ENCODE measurements at regions of chr14 and their contacts with region 1.

Region 1: DNA sequence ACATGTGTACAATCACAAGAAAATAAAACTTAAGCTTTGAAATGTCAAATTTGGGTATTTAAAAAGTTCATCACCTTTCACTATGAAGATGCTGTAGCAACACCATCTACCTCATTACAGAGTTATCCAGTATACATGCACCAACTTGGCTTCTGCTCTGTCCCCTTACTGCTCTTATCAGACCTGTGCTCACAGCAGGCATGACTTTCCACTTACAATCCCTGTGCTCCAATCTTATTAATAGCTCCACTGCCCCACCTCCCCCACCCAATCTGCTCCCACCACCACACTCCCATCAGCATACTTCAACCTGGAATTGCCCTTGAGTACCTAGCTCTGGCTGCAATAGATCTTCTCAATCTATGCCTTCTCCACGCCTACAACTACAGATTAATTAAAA is 13.3 kb downstream of the GALC start:
- DNase-seq: no peak
- H3K4me3 ChIP-seq: no peak overlapping the region
- H3K27ac ChIP-seq: no peak overlapping the region
- H3K4me1 ChIP-seq: no peaks in the 10 kb centered on the region
- H3K27me3 ChIP-seq: no peaks in the 10 kb centered on the region
- CTCF ChIP-seq: no peak
- EP300 ChIP-seq: no peak
- POLR2A ChIP-seq: no peak

Region 2: GRCh38 chr14:88005050-88005481 is 25.4 kb after region 1 on chr14 and contains the start of gene GPR65:
- in situ Hi-C with region 1: no loop called
- intact Hi-C with region 1: loop called (anchors 1 kb)
- DNase-seq: no peak
- H3K4me3 ChIP-seq: peak within 1 kb of the TSS in 1 of 4 donors; percentile 27
- H3K27ac ChIP-seq: peak within 1 kb of the TSS; percentile 47 to 73 (median 56)
- H3K4me1 ChIP-seq: no peaks in the 10 kb centered on the region
- H3K27me3 ChIP-seq: no peaks in the 10 kb centered on the region
- CTCF ChIP-seq: no peak
- EP300 ChIP-seq: no peak
- POLR2A ChIP-seq: peak; percentile 67
- total RNA-seq, gene GPR65: 0.68 to 1.6 TPM in 2 of 4 donors, not detected in the others

Measured in transverse colon (tissue), 4 donors.